H1 (cell line): ENCODE measurements at regions of chr4 and their contacts with region 1.

Region 1: GRCh38 chr4:4430492-4431197 is 43.7 kb downstream of the NSG1 start:
- DNase-seq: peak in 1 of 2 experiments; percentile 74
- H3K4me3 ChIP-seq: no peak overlapping the region
- H3K27ac ChIP-seq: no peak overlapping the region
- H3K4me1 ChIP-seq: peaks cover 13 to 23% (median 18%) of the 10 kb centered on the region in 4 experiments
- H3K27me3 ChIP-seq: no peaks in the 10 kb centered on the region; a peak in 1 of 7 replicates
- CTCF ChIP-seq: peak in 2 of 3 experiments; percentile 82 to 98; a peak in 3 of 4 replicates
- EP300 ChIP-seq: no peak
- POLR2A ChIP-seq: no peak
- RAD21 ChIP-seq: peak; percentile 70 to 76

Region 2: GRCh38 chr4:4377732-4378460 is 52.7 kb before region 1 on chr4:
- CTCF ChIA-PET with region 1: interaction called, 25 read pairs
- POLR2A ChIA-PET with region 1: no interaction called
- DNase-seq: no peak
- H3K4me3 ChIP-seq: no peak overlapping the region
- H3K27ac ChIP-seq: no peak overlapping the region
- H3K4me1 ChIP-seq: peaks cover 0 to 12% (median 4%) of the 10 kb centered on the region in 4 experiments; a peak in 6 of 7 replicates
- H3K27me3 ChIP-seq: peaks cover 0 to 1% (median 0%) of the 10 kb centered on the region in 4 experiments; a peak in 2 of 7 replicates
- CTCF ChIP-seq: no peak
- EP300 ChIP-seq: no peak
- POLR2A ChIP-seq: no peak
- RAD21 ChIP-seq: no peak

Region 3: GRCh38 chr4:4386736-4387392 is 43.8 kb before region 1 on chr4 and contains the start of gene NSG1:
- CTCF ChIA-PET with region 1: interaction called, 28 read pairs
- POLR2A ChIA-PET with region 1: no interaction called
- DNase-seq: peak in 1 of 2 experiments; percentile 71
- H3K4me3 ChIP-seq: peak within 1 kb of the TSS; percentile 67 to 92 (median 67)
- H3K27ac ChIP-seq: no peak within 1 kb of the TSS
- H3K4me1 ChIP-seq: peaks cover 0 to 12% (median under 1%) of the 10 kb centered on the region in 4 experiments; a peak in 4 of 7 replicates
- H3K27me3 ChIP-seq: peaks cover 8 to 35% (median 26%) of the 10 kb centered on the region in 4 experiments; a peak in 6 of 7 replicates
- CTCF ChIP-seq: no peak
- EP300 ChIP-seq: no peak
- POLR2A ChIP-seq: no peak; a peak in 1 of 3 replicates
- RAD21 ChIP-seq: no peak
- total RNA-seq, gene NSG1: 56.6 and 61.4 TPM in 2 replicates

Region 4: GRCh38 chr4:4395849-4396637 is 34.6 kb before region 1 on chr4:
- CTCF ChIA-PET with region 1: interaction called, 16 read pairs
- POLR2A ChIA-PET with region 1: no interaction called
- DNase-seq: peak in 1 of 2 experiments; percentile 53
- H3K4me3 ChIP-seq: no peak overlapping the region
- H3K27ac ChIP-seq: no peak overlapping the region
- H3K4me1 ChIP-seq: peaks cover 0 to 8% (median 5%) of the 10 kb centered on the region in 4 experiments; a peak in 4 of 7 replicates
- H3K27me3 ChIP-seq: no peaks in the 10 kb centered on the region
- CTCF ChIP-seq: no peak
- EP300 ChIP-seq: no peak
- POLR2A ChIP-seq: no peak
- RAD21 ChIP-seq: no peak

Region 5: DNA sequence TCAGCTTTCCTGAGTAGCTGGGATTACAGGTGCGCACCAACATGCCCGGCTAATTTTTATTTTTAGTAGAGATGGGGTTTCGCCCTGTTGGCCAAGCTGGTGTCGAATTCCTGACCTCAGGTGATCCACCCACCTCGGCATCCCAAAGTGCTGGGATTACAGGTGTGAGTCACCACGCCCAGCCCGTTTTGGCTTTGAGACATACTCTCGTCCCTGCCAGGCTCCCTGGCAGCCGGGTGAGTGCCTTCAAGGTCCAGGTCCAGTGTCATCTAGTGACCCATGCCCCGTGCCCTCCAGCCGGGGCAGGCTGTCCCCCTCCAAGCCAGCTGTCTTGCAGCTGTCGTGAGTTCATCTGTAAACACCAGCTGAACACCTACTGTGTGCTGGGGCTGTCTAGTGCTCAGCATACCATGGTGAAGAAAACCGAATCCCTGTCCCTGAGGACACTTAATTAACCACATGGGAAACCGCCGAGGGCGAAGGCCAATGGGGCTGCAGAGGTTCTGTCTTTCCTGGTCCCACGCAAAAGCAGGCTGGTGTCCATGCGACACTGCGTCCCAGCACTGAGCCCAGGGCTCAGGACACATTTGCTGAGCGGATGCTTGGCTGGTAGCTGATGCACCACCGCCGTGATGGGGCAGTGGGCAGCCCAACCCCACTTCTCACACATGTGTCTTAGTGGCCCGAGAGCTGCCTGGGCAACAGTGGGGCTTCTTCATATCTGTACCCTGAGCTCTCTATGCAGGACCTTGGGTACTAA is 21.9 kb before region 1 on chr4:
- CTCF ChIA-PET with region 1: interaction called, 13 read pairs
- POLR2A ChIA-PET with region 1: interaction called, 5 read pairs
- DNase-seq: no peak
- H3K4me3 ChIP-seq: no peak overlapping the region
- H3K27ac ChIP-seq: no peak overlapping the region
- H3K4me1 ChIP-seq: no peaks in the 10 kb centered on the region; a peak in 2 of 7 replicates
- H3K27me3 ChIP-seq: no peaks in the 10 kb centered on the region
- CTCF ChIP-seq: no peak
- EP300 ChIP-seq: no peak
- POLR2A ChIP-seq: no peak
- RAD21 ChIP-seq: no peak

Region 6: GRCh38 chr4:4415806-4416805 is 14.5 kb before region 1 on chr4:
- CTCF ChIA-PET with region 1: interaction called, 22 read pairs
- POLR2A ChIA-PET with region 1: interaction called, 17 read pairs
- DNase-seq: no peak
- H3K4me3 ChIP-seq: no peak overlapping the region
- H3K27ac ChIP-seq: no peak overlapping the region
- H3K4me1 ChIP-seq: no peaks in the 10 kb centered on the region
- H3K27me3 ChIP-seq: no peaks in the 10 kb centered on the region
- CTCF ChIP-seq: no peak
- EP300 ChIP-seq: no peak
- POLR2A ChIP-seq: no peak
- RAD21 ChIP-seq: 0 out of 4 replicates have a peak, but pooled peaks of 1 of the 2 experiments have one; percentile 14

Region 7: GRCh38 chr4:4443821-4444220 is 13.2 kb after region 1 on chr4:
- CTCF ChIA-PET with region 1: interaction called, 18 read pairs
- POLR2A ChIA-PET with region 1: interaction called, 4 read pairs
- DNase-seq: no peak
- H3K4me3 ChIP-seq: no peak overlapping the region
- H3K27ac ChIP-seq: no peak overlapping the region
- H3K4me1 ChIP-seq: peaks cover 0 to 3% (median 0%) of the 10 kb centered on the region in 4 experiments; a peak in 1 of 7 replicates
- H3K27me3 ChIP-seq: no peaks in the 10 kb centered on the region
- CTCF ChIP-seq: no peak
- EP300 ChIP-seq: no peak
- POLR2A ChIP-seq: no peak
- RAD21 ChIP-seq: no peak

Region 8: DNA sequence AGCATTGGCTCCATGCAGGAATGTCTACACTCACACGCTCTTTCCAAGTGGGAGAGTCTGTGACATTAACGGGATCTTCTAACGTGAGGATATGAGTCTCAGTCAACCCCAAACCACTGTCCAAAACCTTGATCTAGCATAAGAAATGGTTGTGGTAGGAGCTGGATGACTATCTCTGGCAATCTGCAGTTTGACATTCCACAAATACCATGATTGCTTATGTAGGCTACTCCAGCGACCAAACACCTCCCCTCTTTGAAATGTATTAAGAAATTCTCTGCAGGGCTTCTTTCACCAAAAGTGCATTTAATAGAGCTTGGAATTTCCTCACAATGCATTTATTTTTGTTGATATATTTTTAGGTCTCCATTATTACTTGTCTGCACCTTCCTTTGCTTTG is 125.3 kb after region 1 on chr4:
- CTCF ChIA-PET with region 1: no interaction called
- POLR2A ChIA-PET with region 1: no interaction called
- DNase-seq: no peak
- H3K4me3 ChIP-seq: no peak overlapping the region
- H3K27ac ChIP-seq: no peak overlapping the region
- H3K4me1 ChIP-seq: peaks cover 0 to 4% (median 1%) of the 10 kb centered on the region in 4 experiments; a peak in 2 of 7 replicates
- H3K27me3 ChIP-seq: no peaks in the 10 kb centered on the region
- CTCF ChIP-seq: no peak
- EP300 ChIP-seq: no peak
- POLR2A ChIP-seq: no peak
- RAD21 ChIP-seq: no peak